Cardiac septum (tissue), 1 donor: ENCODE measurements at regions of chr19 and their contacts with region 1.

Region 1: GRCh38 chr19:16572332-16573211 is at the start of gene SLC35E1:
- DNase-seq: peak; percentile 98
- total RNA-seq, gene SLC35E1: 26.7 TPM

Region 2: DNA sequence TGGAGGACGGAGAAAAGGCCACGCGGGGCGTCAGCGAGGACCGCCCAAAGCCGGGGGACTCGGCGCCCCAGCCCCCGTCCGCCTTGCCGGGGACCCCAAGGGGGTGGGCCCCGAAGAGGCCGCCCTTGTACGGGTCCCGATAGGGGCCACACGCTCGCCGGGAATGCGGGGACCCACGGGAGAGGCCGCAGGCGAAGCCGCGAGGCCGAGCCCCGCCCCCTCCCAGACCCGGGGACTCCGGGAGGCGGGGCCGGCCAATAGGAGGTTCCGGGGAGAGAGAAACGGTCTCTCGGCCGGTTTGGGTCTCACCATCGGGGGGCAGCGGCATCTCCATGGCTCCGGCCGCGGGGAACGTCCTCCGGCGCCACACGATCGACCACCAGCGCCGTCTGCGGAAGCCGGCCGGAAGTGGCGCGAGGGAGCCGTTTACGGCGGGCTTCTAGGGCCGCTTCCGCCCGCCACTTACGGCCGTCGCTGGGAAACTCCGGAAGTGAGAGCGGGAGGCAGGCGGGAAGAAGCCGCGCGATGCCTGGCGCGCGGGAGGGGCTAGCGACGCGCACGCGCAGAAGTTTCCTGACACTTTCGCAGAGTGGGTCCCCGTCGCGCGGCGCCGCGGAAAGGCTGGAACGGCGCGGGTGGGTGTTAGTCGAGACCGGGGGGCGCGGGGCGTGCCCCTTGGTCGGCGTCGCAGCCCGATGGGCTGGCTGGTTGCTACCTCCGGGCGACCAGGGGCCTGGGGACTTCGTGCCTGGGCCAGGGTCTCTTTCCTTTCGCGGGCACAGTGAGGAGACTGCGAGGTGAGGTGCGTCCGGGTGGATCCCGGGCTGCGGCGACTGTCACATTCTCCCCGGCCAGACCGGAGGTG is 30.3 kb before region 1 on chr19 and contains the start of gene CHERP:
- intact Hi-C with region 1: loop called (anchors 2 kb)
- DNase-seq: peak; percentile 97
- total RNA-seq, gene CHERP: 23.7 TPM

Region 3: GRCh38 chr19:16561382-16561781 is 11.2 kb before region 1 on chr19:
- intact Hi-C with region 1: no loop called
- DNase-seq: no peak

Region 4: GRCh38 chr19:16584248-16585141 is 11.9 kb after region 1 on chr19:
- intact Hi-C with region 1: loop called (anchors 1 kb)
- DNase-seq: peak; percentile 88

Region 5: GRCh38 chr19:16628183-16628983 is 55.8 kb after region 1 on chr19 and contains the start of gene MED26:
- intact Hi-C with region 1: loop called (anchors 2 kb)
- DNase-seq: peak; percentile 99
- total RNA-seq, gene MED26: 4.3 TPM